ENCODE measurements at regions of chr1 and their contacts with region 1.

Region 1: GRCh38 chr1:8702850-8703810 is 114.3 kb downstream of the RERE start:
- DNase-seq: peak; percentile 80 to 93
- H3K4me3 ChIP-seq: peak overlapping the region; percentile 65
- H3K27ac ChIP-seq: peak overlapping the region; percentile 79
- H3K4me1 ChIP-seq: peaks cover 50% of the 10 kb centered on the region
- H3K27me3 ChIP-seq: no peaks in the 10 kb centered on the region
- CTCF ChIP-seq: no peak

Region 2: DNA sequence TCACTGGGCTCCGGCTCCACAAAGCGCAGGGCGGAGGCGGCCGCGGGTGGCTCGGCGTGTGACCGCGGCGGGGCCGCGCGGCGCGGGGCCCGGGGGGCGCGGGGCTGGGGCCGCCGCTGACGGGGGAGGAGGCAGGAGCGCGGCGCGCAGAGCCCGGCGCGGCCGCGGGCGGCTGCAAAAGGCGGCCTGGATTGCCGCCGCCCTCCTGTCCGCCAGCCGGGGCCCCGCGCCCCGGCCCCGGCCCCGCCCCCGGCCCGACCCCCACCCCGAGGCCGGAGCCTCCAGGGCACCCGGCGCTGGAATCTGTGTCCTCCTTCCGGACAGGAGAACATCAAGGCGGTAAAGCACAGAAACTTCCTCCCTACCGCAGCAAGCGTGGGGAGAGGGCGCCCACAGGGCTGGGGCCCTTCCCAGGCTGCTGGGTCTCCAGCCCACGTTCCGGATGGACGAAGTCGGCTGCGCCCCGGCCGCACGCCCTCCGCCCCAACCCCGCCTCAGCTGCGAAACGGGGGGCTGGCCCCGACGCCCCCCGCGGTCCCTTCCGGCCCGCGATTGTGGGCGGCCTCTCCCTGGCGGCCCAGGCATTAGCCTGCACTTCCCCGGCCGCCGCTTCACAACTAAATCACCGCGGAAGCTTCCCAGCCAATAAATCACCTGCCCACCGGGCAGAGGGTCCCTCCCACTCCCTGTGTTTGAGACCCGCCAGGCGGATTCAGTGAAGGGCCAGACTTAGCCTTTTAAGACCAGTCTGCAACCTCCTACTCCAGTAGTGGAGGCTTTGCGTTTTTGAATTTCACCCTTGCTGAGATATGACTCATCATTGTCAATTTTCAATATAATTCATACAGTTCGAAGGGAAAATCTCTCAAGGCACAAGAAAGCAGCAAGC is 279.2 kb before region 1 on chr1:
- CTCF ChIA-PET with region 1: interaction called, 7 read pairs
- POLR2A ChIA-PET with region 1: no interaction called
- intact Hi-C with region 1: loop called (anchors 2 kb)
- DNase-seq: peak in 1 of 2 experiments; percentile 51
- H3K4me3 ChIP-seq: peak overlapping the region; percentile 70
- H3K27ac ChIP-seq: peak overlapping the region; percentile 84
- H3K4me1 ChIP-seq: peaks cover 36% of the 10 kb centered on the region
- H3K27me3 ChIP-seq: no peaks in the 10 kb centered on the region
- CTCF ChIP-seq: no peak

Region 3: GRCh38 chr1:8512504-8512903 is 190.6 kb before region 1 on chr1:
- CTCF ChIA-PET with region 1: no interaction called
- POLR2A ChIA-PET with region 1: no interaction called
- intact Hi-C with region 1: no loop called
- DNase-seq: no peak
- H3K4me3 ChIP-seq: no peak overlapping the region
- H3K27ac ChIP-seq: no peak overlapping the region
- H3K4me1 ChIP-seq: no peaks in the 10 kb centered on the region
- H3K27me3 ChIP-seq: no peaks in the 10 kb centered on the region
- CTCF ChIP-seq: no peak

Region 4: DNA sequence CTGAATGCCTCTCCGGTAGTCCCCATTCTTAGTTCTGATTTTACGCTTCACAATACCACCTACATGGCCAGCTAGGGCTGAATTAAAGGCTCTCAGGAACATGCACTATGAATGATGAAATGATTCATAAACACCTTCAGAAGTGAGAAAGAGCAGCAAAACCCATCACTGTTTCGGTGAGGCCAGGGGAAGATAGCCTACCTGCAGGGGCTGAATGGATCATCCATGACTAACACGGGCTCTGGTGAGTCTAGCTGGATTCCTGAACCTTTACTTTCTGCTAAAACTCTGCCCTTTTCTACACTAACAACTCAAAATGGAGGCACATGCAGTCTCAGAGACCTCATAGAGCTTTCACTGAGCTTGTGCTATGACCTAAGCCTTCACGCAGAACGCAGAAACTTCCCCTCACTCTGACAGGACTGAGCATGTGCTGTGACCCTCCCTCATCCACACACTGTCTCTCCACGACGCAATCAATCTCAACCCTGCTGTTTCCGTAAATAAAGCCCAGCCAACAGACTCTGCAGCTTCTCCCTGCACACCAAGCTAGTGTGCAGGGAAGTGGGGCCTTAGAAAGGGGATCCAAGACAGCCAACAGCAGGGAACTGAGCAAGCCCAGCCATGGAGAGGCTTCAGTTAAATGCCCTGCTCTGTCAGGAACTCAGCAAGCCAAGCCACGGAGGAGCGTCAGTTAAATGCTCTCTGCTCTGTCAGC is 177.4 kb before region 1 on chr1:
- CTCF ChIA-PET with region 1: no interaction called
- POLR2A ChIA-PET with region 1: interaction called, 14 read pairs
- intact Hi-C with region 1: no loop called
- DNase-seq: peak; percentile 63 to 67
- H3K4me3 ChIP-seq: peak overlapping the region; percentile 55
- H3K27ac ChIP-seq: peak overlapping the region; percentile 65
- H3K4me1 ChIP-seq: peaks cover 18% of the 10 kb centered on the region
- H3K27me3 ChIP-seq: no peaks in the 10 kb centered on the region
- CTCF ChIP-seq: no peak

Region 5: GRCh38 chr1:8560611-8561544 is 142.3 kb before region 1 on chr1:
- CTCF ChIA-PET with region 1: interaction called, 6 read pairs
- POLR2A ChIA-PET with region 1: no interaction called
- intact Hi-C with region 1: loop called (anchors 1 kb)
- DNase-seq: peak; percentile 5 to 43
- H3K4me3 ChIP-seq: no peak overlapping the region
- H3K27ac ChIP-seq: no peak overlapping the region
- H3K4me1 ChIP-seq: peaks cover 13% of the 10 kb centered on the region
- H3K27me3 ChIP-seq: no peaks in the 10 kb centered on the region
- CTCF ChIP-seq: peak; percentile 86

Region 6: DNA sequence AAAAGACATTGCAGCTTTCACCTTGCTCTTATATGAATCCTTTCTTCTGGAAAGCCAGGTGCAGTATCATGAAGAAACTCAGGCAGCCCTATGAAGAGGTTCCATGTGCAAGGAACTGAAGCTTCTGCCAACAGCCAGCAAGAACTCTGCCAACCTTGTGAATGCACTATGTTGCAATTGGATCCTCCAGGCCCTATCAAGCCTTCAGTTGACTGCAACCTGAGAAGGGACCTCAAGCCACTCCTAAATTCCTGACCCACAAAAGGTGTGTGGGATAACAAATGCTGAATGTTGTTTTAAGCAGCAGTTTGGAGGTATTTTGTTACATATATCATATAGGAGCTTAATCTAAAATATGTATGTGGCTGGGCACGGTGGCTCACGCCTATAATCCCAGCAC is 30.3 kb after region 1 on chr1:
- CTCF ChIA-PET with region 1: no interaction called
- POLR2A ChIA-PET with region 1: interaction called, 10 read pairs
- intact Hi-C with region 1: no loop called
- DNase-seq: peak; percentile 68 to 88
- H3K4me3 ChIP-seq: no peak overlapping the region
- H3K27ac ChIP-seq: no peak overlapping the region
- H3K4me1 ChIP-seq: peaks cover 9% of the 10 kb centered on the region; the same call in 1 of the 2 replicates
- H3K27me3 ChIP-seq: no peaks in the 10 kb centered on the region
- CTCF ChIP-seq: no peak

Region 7: GRCh38 chr1:8789314-8790214 is 86.4 kb after region 1 on chr1:
- CTCF ChIA-PET with region 1: no interaction called
- POLR2A ChIA-PET with region 1: no interaction called
- intact Hi-C with region 1: loop called (anchors 1 kb)
- DNase-seq: peak; percentile 61 to 76
- H3K4me3 ChIP-seq: no peak overlapping the region
- H3K27ac ChIP-seq: no peak overlapping the region
- H3K4me1 ChIP-seq: peaks cover 9% of the 10 kb centered on the region
- H3K27me3 ChIP-seq: no peaks in the 10 kb centered on the region
- CTCF ChIP-seq: no peak

Region 8: GRCh38 chr1:10347109-10347508 is 1644.0 kb after region 1 on chr1:
- CTCF ChIA-PET with region 1: no interaction called
- POLR2A ChIA-PET with region 1: no interaction called
- intact Hi-C with region 1: no loop called
- DNase-seq: no peak
- H3K4me3 ChIP-seq: no peak overlapping the region
- H3K27ac ChIP-seq: no peak overlapping the region
- H3K4me1 ChIP-seq: no peaks in the 10 kb centered on the region
- H3K27me3 ChIP-seq: no peaks in the 10 kb centered on the region
- CTCF ChIP-seq: no peak

Region 9: DNA sequence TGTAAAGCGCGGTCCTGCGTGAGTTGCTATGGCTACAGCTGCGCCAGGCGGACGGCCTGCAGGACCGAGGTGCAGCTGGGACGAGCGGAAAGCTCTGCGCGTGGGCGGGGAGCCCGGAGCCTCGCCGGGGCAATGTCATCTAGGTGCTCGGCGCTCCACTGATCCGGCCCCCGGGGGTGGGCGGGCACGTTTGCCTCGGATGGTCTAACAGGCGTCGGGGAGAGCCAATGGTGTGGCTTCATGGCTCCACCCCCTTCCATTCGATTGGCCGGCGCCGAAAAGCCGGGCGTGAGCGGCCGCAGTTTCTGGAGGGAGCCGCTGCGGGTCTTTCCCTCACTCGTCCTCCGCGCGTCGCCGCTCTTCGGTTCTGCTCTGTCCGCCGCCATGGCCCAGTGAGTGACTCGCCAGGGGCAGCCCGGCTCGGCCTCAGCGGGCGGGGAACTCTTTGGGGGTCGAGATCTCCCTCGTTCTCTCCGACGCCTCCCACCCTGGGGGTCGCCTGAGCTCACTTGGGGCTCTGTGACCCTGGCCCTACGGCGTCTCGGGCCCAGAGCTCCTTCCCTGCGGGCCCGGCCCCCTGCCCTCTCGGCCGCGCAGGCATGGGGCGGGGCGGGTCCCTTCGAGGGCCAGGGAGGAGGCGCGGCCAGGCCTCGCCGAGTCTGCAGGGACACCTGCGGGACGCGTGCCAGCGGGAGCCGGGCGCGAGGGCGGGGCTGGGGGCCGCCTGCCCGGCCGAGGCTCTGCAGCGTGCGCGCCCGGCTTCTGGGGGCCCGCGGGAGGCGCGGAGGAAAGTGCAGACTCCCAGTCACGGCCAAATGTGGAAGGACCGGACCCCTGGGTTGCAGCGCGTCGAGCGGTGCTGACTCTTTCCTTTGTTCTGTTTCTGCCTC is 1695.8 kb after region 1 on chr1 and contains the start of gene PGD:
- CTCF ChIA-PET with region 1: interaction called, 16 read pairs
- POLR2A ChIA-PET with region 1: no interaction called
- intact Hi-C with region 1: no loop called
- DNase-seq: peak; percentile 88 to 98
- H3K4me3 ChIP-seq: peak within 1 kb of the TSS; percentile 94
- H3K27ac ChIP-seq: peak within 1 kb of the TSS; percentile 89
- H3K4me1 ChIP-seq: peaks cover 25% of the 10 kb centered on the region
- H3K27me3 ChIP-seq: no peaks in the 10 kb centered on the region
- CTCF ChIP-seq: no peak
- total RNA-seq, gene PGD: 526 and 559 TPM in 2 replicates

Measured in PC-9 (cell line).